SK-N-SH (cell line): ENCODE measurements at regions of chr10 and their contacts with region 1.

Region 1: DNA sequence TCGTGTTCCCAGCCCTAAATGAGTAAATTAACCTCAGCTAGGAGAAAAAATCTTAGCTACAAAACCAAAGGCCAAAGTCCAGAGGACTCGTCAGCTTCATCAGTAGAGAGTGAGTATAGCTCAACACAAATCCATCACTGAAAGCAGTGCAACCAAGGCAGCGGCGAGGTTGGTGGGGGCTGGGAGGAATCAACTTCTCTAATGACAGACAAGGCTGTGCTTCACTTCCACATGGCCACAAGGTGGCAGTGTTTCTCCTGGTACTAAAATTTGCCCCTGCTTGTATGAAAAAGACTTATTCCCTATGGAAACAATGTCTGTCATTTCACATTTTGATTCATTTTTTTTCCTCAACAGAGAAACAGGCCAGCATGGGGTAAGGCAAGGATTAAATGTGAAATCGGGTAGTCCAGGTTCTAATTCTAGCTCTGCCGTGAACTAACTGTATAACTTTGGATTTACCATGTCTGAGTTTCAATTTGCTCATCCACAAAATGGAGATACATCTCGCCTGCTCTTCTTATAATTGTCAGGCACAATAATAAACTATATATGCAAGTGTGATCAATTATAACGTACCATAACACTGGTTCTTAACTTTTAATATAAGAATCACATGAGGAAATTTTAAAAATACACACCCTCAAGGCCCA is 39.3 kb downstream of the FAS start:
- DNase-seq: peak; percentile 60
- H3K4me3 ChIP-seq: no peak overlapping the region; a peak in 1 of 4 replicates
- H3K27ac ChIP-seq: no peak overlapping the region
- H3K4me1 ChIP-seq: peaks cover 7 to 14% of the 10 kb centered on the region in 2 experiments; a peak in 3 of 4 replicates
- H3K27me3 ChIP-seq: no peaks in the 10 kb centered on the region
- CTCF ChIP-seq: peak; percentile 91
- EP300 ChIP-seq: no peak
- RAD21 ChIP-seq: peak; percentile 94

Region 2: GRCh38 chr10:89007129-89007893 is 22.6 kb before region 1 on chr10:
- CTCF ChIA-PET with region 1: interaction called, 11 read pairs
- POLR2A ChIA-PET with region 1: no interaction called
- DNase-seq: no peak
- H3K4me3 ChIP-seq: no peak overlapping the region
- H3K27ac ChIP-seq: no peak overlapping the region
- H3K4me1 ChIP-seq: no peaks in the 10 kb centered on the region
- H3K27me3 ChIP-seq: no peaks in the 10 kb centered on the region
- CTCF ChIP-seq: no peak
- EP300 ChIP-seq: no peak
- RAD21 ChIP-seq: no peak

Region 3: DNA sequence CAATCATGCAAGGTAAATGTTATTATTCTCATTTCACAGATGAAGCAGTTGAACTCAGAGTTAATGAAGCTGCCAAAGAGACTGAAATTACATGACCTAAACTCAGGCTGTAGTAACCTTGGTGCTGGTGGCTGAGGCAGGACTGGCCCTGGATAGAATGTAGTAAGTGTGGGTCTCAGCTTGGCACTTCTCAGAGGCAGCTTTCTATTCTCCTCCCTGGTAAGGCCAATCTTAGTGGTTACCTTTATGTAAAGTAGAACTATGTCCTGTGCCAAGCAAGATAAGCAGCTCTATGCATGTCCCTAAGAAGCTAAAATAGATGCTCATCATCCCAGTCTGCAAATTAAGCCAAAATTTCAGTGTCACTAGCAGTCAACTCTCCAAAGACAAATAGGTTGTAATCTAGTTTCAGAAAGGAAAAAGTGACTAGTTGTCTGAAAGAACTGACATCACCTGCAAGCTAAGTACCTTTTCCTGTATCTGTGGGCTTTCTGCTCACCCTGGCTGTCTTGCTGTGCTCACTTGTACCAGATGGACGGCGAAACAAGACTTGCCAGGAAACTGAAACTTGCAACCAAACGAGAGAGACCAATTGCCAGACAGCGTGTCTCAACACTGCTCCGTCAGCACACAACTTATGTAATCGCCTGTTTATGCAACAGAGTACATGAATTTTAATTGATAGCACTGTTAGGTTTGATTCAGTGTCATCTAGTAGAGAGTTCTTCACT is 133.5 kb after region 1 on chr10:
- CTCF ChIA-PET with region 1: interaction called, 11 read pairs
- POLR2A ChIA-PET with region 1: no interaction called
- DNase-seq: no peak
- H3K4me3 ChIP-seq: no peak overlapping the region
- H3K27ac ChIP-seq: no peak overlapping the region
- H3K4me1 ChIP-seq: 0 out of 4 replicates have a peak, but pooled peaks cover 0 to 4% of the 10 kb centered on the region in 2 experiments
- H3K27me3 ChIP-seq: no peaks in the 10 kb centered on the region; the same call in none of the 2 replicates
- CTCF ChIP-seq: no peak
- EP300 ChIP-seq: no peak
- RAD21 ChIP-seq: no peak

Region 4: GRCh38 chr10:89207181-89207800 is 177.4 kb after region 1 on chr10 and contains the start of gene CH25H:
- CTCF ChIA-PET with region 1: interaction called, 71 read pairs
- POLR2A ChIA-PET with region 1: no interaction called
- DNase-seq: peak; percentile 72
- H3K4me3 ChIP-seq: peak within 1 kb of the TSS; percentile 49 to 67
- H3K27ac ChIP-seq: no peak within 1 kb of the TSS
- H3K4me1 ChIP-seq: peaks cover 7 to 19% of the 10 kb centered on the region in 2 experiments; a peak in 3 of 4 replicates
- H3K27me3 ChIP-seq: peaks cover 22% of the 10 kb centered on the region; the same call in 1 of the 2 replicates
- CTCF ChIP-seq: no peak
- EP300 ChIP-seq: no peak
- RAD21 ChIP-seq: no peak
- polyA plus RNA-seq, gene CH25H: not detected in 2 replicates

Region 5: GRCh38 chr10:89332123-89332633 is 302.3 kb after region 1 on chr10:
- CTCF ChIA-PET with region 1: no interaction called
- POLR2A ChIA-PET with region 1: no interaction called
- DNase-seq: no peak
- H3K4me3 ChIP-seq: peak overlapping the region in 1 of 2 experiments; percentile 44; a peak in 2 of 4 replicates
- H3K27ac ChIP-seq: peak overlapping the region in 1 of 2 experiments; percentile 58; a peak in 2 of 4 replicates
- H3K4me1 ChIP-seq: peaks cover 0 to 28% of the 10 kb centered on the region in 2 experiments; a peak in 2 of 4 replicates
- H3K27me3 ChIP-seq: no peaks in the 10 kb centered on the region
- CTCF ChIP-seq: no peak
- EP300 ChIP-seq: no peak
- RAD21 ChIP-seq: no peak